ENCODE measurements at regions of chr20 and their contacts with region 1.

Region 1: DNA sequence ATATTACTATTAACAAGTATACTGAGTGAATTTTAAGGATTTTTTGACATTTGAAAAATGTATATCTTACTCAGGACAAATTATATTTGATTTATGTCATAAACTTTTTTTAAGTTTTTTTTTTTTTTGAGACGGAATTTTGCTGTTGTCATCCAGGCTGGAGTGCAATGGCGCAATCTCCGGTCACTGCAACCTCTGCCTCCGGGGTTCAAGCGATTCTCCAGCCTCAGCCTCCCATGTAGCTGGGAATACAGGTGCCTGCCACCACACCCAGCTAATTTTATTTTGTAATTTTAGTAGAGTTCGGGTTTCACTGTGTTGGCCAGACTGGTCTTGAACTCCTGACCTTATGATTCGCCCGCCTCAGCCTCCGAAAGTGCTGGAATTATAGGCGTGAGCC is 44.5 kb downstream of the PHF20 start:
- DNase-seq: no peak

Region 2: DNA sequence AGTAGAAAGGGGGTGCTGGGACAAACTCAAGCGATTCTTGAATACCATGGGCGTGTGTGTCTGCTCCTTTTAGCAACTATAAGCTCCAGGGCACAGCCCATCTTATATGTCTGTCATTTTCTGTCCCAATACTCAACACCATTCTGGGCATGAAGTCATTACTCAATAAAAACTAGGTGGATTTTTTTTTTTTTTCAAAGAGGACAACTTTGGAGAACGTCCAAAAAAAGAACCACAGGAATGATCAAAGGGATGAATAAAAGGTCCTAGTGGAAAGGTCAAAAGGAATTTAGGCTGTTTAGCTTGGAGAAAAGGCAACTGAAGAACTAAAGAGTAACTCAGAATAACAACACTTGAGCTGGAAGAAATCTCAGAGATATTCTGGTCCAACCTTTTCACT is 429.0 kb before region 1 on chr20:
- intact Hi-C with region 1: no loop called
- DNase-seq: no peak

Region 3: DNA sequence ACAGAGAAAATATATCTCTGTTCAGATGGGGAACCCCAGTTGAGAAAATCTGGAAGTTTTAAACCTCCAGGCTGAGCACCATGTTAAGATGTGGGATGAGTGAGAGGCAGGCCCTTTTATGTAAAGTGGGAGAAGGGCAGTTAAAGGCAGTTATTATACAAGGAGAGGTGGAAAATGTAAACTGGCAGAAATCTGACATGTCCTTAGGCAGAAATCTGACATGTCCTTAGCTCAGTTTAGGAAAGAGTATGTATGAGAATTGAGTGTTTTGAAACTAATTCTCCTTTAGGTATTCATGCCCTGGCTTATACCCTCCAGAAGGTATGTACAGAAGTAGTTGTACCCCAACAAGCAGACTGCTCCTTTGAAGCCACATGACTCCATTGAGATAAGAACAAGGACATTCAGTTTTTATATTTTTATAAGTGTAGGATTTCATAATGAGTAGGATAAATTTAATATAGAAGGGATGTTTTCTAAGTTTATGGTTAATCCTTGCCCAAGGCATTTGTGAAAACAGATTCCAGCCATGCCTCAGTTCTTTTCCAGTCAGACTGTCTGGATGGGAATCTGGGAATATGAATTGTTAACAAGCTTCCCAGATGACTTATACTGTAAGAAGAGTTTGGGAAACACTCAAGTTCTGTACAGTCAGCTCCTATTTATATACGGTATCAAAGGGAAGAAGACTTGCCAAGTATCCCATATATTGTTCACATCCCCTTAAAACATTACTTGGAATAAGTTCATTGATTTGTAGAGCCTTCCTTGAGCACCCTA is 50.3 kb after region 1 on chr20:
- intact Hi-C with region 1: loop called in 1 of 2 experiments (anchors 10 kb)
- DNase-seq: no peak

Region 4: GRCh38 chr20:35907017-35907701 is 90.8 kb after region 1 on chr20:
- intact Hi-C with region 1: no loop called
- DNase-seq: no peak

Region 5: GRCh38 chr20:36268440-36269342 is 452.4 kb after region 1 on chr20:
- intact Hi-C with region 1: no loop called
- DNase-seq: no peak

Measured in posterior vena cava (tissue), 2 donors.